Endothelial cell of umbilical vein (primary cell): ENCODE measurements at regions of chr14 and their contacts with region 1.

Region 1: DNA sequence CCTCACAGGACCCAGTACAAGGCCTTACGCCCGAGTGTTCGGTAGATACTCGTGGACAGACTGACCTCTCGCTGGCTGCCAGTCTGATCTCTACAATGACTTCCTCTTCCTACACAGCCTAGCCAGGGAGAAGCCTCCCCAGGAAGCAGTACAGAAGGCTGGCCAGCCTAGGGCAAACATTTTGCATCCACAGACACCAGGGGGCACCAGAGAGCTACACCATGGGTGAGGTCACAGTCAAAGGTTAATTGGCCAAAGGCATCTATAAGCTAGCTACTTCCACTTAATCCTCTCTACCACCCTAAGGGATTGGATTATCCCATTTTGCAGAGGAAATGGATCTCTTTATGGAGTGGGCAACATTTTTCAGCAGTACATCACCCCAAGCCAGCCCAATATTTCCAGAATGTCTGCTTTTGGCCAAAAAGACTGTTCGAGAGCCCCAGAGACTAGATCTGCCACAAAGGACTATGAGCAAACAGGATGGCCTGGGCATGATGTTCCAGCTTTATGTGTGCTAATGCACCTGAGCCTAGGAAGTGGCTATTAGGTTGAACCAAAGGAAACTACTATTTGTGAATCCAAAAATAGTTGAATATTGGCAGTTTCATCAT is 14.6 kb upstream of the PNMA1 start:
- DNase-seq: peak; percentile 88
- H3K4me3 ChIP-seq: no peak overlapping the region
- H3K27ac ChIP-seq: peak overlapping the region; percentile 70
- H3K4me1 ChIP-seq: peaks cover 51% of the 10 kb centered on the region
- H3K27me3 ChIP-seq: no peaks in the 10 kb centered on the region
- CTCF ChIP-seq: peak; percentile 90 to 91
- POLR2A ChIP-seq: no peak

Region 2: GRCh38 chr14:73713803-73714655 is 14.8 kb before region 1 on chr14 and contains the start of gene PNMA1:
- CTCF ChIA-PET with region 1: interaction called, 15 read pairs
- POLR2A ChIA-PET with region 1: interaction called, 5 read pairs
- dilution Hi-C with region 1: no loop called
- intact Hi-C with region 1: loop called (anchors 1 kb)
- DNase-seq: peak; percentile 89
- H3K4me3 ChIP-seq: peak within 1 kb of the TSS; percentile 15 to 81 (median 74)
- H3K27ac ChIP-seq: peak within 1 kb of the TSS; percentile 73
- H3K4me1 ChIP-seq: peaks cover 15% of the 10 kb centered on the region
- H3K27me3 ChIP-seq: no peaks in the 10 kb centered on the region
- CTCF ChIP-seq: no peak
- POLR2A ChIP-seq: peak; percentile 91
- total RNA-seq, gene PNMA1: 82.4 and 82.6 TPM in 2 replicates

Region 3: GRCh38 chr14:73753959-73754882 is 25.4 kb after region 1 on chr14:
- CTCF ChIA-PET with region 1: interaction called, 245 read pairs
- POLR2A ChIA-PET with region 1: interaction called, 5 read pairs
- dilution Hi-C with region 1: no loop called
- intact Hi-C with region 1: loop called (anchors 1 kb)
- DNase-seq: peak; percentile 57
- H3K4me3 ChIP-seq: peak overlapping the region in 1 of 3 experiments; percentile 39
- H3K27ac ChIP-seq: peak overlapping the region; percentile 96
- H3K4me1 ChIP-seq: peaks cover 81% of the 10 kb centered on the region
- H3K27me3 ChIP-seq: no peaks in the 10 kb centered on the region
- CTCF ChIP-seq: no peak
- POLR2A ChIP-seq: no peak

Region 4: DNA sequence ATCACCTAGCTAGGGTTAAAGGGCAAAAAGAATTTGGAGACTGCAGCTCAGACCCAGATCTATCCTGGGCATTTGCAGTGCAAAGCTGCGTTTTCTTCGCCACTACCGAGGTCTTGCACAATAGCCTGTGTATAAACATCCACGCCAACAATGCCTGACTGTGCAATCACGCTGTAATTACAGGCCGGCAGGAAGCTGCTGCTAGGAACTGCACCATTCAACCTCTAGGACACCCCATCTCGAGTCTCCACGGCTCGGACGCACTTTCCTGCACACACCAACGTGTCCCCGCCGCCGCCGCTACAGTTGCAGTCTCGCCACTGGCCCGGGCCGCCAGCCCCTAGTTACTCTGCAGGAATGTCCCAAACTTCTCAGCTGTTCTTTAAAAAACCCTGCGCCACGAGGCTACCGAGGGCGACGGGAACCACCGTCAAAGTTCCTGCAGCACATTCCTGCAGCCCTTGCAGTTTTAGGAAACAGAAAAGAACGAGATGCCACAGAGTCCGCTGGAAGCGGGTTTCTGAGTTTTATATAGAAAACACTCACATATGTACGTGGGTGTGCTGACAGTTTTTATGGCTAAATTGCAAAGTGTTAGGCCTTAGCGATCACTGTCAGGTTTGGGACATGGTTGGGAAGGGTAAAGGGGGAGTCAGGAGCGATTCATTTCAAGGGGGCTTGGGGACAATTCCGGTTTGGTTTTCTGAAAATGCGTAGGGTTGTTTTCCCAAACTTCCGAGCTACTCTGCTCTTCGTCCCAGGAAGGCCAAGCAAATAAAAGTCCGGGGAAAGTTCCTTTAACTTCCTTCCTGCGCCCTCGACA is 57.3 kb after region 1 on chr14:
- CTCF ChIA-PET with region 1: interaction called, 6 read pairs
- POLR2A ChIA-PET with region 1: interaction called, 3 read pairs
- dilution Hi-C with region 1: no loop called
- intact Hi-C with region 1: loop called (anchors 1 kb)
- DNase-seq: peak; percentile 84
- H3K4me3 ChIP-seq: peak overlapping the region; percentile 33 to 79 (median 47)
- H3K27ac ChIP-seq: peak overlapping the region; percentile 93
- H3K4me1 ChIP-seq: peaks cover 52% of the 10 kb centered on the region
- H3K27me3 ChIP-seq: no peaks in the 10 kb centered on the region
- CTCF ChIP-seq: peak in 1 of 2 donors; percentile 35
- POLR2A ChIP-seq: no peak

Region 5: GRCh38 chr14:73862480-73862879 is 133.7 kb after region 1 on chr14:
- CTCF ChIA-PET with region 1: interaction called, 18 read pairs
- POLR2A ChIA-PET with region 1: no interaction called
- dilution Hi-C with region 1: no loop called
- intact Hi-C with region 1: loop called (anchors 5 kb)
- DNase-seq: no peak
- H3K4me3 ChIP-seq: no peak overlapping the region
- H3K27ac ChIP-seq: no peak overlapping the region
- H3K4me1 ChIP-seq: no peaks in the 10 kb centered on the region
- H3K27me3 ChIP-seq: no peaks in the 10 kb centered on the region
- CTCF ChIP-seq: no peak
- POLR2A ChIP-seq: no peak

Region 6: DNA sequence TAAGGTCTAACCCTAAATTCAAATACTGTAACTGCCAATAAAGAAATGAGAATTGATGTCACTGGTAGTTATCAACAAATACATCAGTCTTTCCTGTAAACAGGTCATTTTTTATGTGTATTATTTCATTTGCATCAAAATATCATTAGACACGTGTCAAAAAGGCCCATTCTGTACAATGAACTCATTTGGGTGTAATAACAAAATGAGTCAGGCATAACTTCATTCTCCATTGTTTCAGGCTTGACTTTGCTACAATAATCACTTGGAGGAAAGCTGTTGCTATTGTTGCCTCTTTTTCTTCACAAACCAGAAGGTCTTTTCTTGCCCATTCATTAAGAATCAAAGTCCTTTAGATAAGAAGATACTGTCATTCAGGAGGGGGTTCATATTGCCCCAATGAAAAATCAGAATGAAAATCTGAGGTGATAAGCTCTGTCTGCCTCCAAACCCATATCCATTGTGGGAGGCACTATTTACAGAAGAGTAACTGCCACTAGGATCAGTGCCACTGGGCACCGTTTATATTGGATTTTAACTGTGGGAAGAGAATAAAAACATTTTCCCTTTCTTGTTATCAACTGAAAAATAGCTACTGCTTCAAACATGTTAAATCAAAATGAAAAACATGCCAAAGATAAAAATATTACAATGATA is 280.1 kb after region 1 on chr14:
- CTCF ChIA-PET with region 1: no interaction called
- POLR2A ChIA-PET with region 1: no interaction called
- dilution Hi-C with region 1: no loop called
- intact Hi-C with region 1: no loop called
- DNase-seq: peak; percentile 78
- H3K4me3 ChIP-seq: no peak overlapping the region
- H3K27ac ChIP-seq: peak overlapping the region; percentile 69
- H3K4me1 ChIP-seq: peaks cover 10% of the 10 kb centered on the region
- H3K27me3 ChIP-seq: no peaks in the 10 kb centered on the region
- CTCF ChIP-seq: no peak
- POLR2A ChIP-seq: no peak

Region 7: DNA sequence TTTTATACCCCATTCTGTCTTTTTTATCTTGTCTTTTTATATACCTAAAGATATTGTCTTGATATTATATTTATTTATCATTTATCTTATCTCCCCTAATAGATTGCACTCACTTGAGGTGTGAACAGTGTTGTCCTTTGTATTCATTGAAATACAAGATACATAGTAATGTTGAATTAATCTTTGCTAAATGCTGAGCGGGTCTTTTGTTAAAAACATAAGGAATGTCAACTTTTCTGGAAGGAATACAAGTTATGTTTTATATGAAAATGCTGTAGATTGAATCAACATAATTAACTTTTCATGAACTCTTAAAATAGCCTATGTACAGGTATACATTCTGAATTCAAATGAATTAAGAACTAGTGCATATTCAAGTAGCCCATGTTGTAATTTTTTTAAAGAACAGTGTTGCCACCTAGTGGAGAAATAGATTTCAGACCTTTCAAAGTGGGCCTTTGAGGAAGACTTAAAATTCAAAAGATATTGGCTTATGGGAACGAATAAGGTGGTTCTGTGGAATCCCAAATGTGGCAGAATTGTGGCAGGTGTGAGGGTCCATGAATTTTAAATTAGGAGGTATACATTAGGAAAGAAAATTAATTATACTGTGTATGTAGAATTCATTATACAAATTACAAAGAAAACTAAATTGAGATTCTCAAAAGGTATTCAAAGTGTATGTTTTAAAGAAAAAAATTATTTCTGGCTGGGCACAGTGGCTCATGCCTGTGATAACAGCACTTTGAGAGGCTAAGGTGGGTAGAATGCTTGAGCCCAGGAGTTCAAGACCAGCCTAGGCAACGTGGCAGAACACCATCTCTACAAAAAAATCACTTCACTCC is 309.4 kb after region 1 on chr14:
- CTCF ChIA-PET with region 1: interaction called, 3 read pairs
- POLR2A ChIA-PET with region 1: no interaction called
- dilution Hi-C with region 1: no loop called
- intact Hi-C with region 1: loop called (anchors 2 kb)
- DNase-seq: peak; percentile 76
- H3K4me3 ChIP-seq: no peak overlapping the region
- H3K27ac ChIP-seq: no peak overlapping the region
- H3K4me1 ChIP-seq: no peaks in the 10 kb centered on the region
- H3K27me3 ChIP-seq: no peaks in the 10 kb centered on the region
- CTCF ChIP-seq: peak; percentile 39 to 42
- POLR2A ChIP-seq: no peak